Activated CD4-positive, alpha-beta memory T cell treated with anti-CD3 and anti-CD28 coated beads, Interleukin-2, amount 10 ng/mL, durations not matched to agents 7 days and 5 days (primary cell): ENCODE measurements at regions of chr17 and their contacts with region 1.

Region 1: DNA sequence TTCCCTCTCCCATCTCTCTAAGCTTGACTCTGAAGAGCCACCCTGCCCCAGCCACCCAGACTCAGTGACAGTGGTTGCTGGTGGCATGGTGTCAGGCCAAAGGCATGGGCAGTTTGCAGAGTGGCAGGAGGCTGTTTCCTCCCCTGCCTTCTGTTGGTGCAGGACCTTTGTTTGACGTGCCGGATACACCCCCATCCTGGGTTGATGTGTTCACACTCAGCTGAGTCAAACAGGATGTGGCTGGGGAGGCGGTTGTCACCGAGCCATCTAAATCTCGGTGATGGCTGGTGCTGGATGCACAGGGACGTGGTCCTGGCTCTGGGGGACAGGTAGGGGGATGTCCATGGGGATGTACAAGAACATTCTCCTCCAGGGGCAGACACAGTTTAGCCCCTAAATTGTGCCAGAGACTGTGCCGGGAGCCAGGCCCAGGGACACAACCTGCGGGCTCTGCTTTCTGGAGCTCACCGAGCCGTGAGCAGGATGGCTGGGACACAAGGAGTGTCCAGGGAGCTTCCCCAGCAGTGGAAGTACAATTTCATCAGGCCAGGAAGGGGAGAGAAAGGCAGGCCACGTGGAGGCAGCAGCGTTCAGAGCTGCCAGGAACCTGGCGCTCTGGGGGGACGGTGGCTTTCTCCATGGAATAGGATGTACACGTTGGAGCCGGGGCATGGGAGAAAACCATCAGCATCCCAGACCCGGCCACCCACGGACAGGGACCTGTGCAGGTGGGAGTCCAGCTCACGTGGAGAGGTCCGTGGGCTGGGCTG is 264.2 kb downstream of the SEC14L1 start:
- DNase-seq: peak; percentile 91
- H3K4me3 Mint-ChIP-seq: peak overlapping the region; percentile 92
- H3K27ac Mint-ChIP-seq: peak overlapping the region; percentile 94
- H3K4me1 Mint-ChIP-seq: peaks cover 95% of the 10 kb centered on the region
- H3K27me3 Mint-ChIP-seq: no peaks in the 10 kb centered on the region

Region 2: GRCh38 chr17:77372444-77373298 is 32.3 kb before region 1 on chr17:
- CTCF ChIA-PET with region 1: interaction called, 28 read pairs
- POLR2A ChIA-PET with region 1: interaction called, 48 read pairs
- DNase-seq: peak; percentile 81
- H3K4me3 Mint-ChIP-seq: peak overlapping the region; percentile 74
- H3K27ac Mint-ChIP-seq: peak overlapping the region; percentile 82
- H3K4me1 Mint-ChIP-seq: peaks cover 51% of the 10 kb centered on the region
- H3K27me3 Mint-ChIP-seq: peaks cover 3% of the 10 kb centered on the region

Region 3: GRCh38 chr17:77391668-77392375 is 13.2 kb before region 1 on chr17:
- CTCF ChIA-PET with region 1: interaction called, 98 read pairs
- POLR2A ChIA-PET with region 1: interaction called, 140 read pairs
- DNase-seq: peak; percentile 83
- H3K4me3 Mint-ChIP-seq: peak overlapping the region; percentile 66
- H3K27ac Mint-ChIP-seq: peak overlapping the region; percentile 85
- H3K4me1 Mint-ChIP-seq: peaks cover 83% of the 10 kb centered on the region
- H3K27me3 Mint-ChIP-seq: no peaks in the 10 kb centered on the region

Region 4: GRCh38 chr17:77429919-77430752 is 25.1 kb after region 1 on chr17:
- CTCF ChIA-PET with region 1: interaction called, 39 read pairs
- POLR2A ChIA-PET with region 1: interaction called, 28 read pairs
- DNase-seq: peak; percentile 83
- H3K4me3 Mint-ChIP-seq: no peak overlapping the region
- H3K27ac Mint-ChIP-seq: peak overlapping the region; percentile 38
- H3K4me1 Mint-ChIP-seq: peaks cover 83% of the 10 kb centered on the region
- H3K27me3 Mint-ChIP-seq: no peaks in the 10 kb centered on the region

Region 5: GRCh38 chr17:77451245-77451893 is 46.4 kb after region 1 on chr17:
- CTCF ChIA-PET with region 1: interaction called, 11 read pairs
- POLR2A ChIA-PET with region 1: interaction called, 78 read pairs
- DNase-seq: peak; percentile 71
- H3K4me3 Mint-ChIP-seq: peak overlapping the region; percentile 90
- H3K27ac Mint-ChIP-seq: peak overlapping the region; percentile 99
- H3K4me1 Mint-ChIP-seq: peaks cover 74% of the 10 kb centered on the region
- H3K27me3 Mint-ChIP-seq: no peaks in the 10 kb centered on the region

Region 6: DNA sequence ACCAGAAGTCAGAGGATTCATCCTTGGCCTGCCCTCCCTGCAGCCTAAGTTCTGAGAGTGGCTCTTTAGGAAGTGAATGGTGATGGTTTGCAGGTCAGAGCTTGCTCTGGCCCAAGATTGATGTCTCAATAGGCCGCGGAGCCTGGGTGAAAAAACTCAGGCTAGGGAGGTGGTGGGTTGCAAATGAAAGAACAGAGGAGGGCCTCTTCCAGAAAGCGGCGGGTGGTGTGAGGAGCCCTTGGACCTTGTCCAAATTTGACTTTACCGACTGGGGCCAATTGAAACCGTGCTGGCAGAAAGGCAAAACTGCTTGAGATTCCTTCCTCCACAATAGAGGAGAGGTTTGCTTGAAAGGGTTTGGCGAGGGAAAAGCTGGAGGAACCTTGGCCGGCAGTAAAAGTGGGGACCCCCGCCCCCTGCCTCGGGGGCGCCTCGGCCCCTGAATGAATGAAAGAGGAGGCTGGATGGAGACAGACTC is 67.0 kb after region 1 on chr17:
- CTCF ChIA-PET with region 1: interaction called, 19 read pairs
- POLR2A ChIA-PET with region 1: interaction called, 12 read pairs
- DNase-seq: no peak
- H3K4me3 Mint-ChIP-seq: peak overlapping the region; percentile 12
- H3K27ac Mint-ChIP-seq: peak overlapping the region; percentile 84
- H3K4me1 Mint-ChIP-seq: peaks cover 92% of the 10 kb centered on the region
- H3K27me3 Mint-ChIP-seq: no peaks in the 10 kb centered on the region

Region 7: GRCh38 chr17:77494664-77495435 is 89.9 kb after region 1 on chr17:
- CTCF ChIA-PET with region 1: interaction called, 34 read pairs
- POLR2A ChIA-PET with region 1: interaction called, 9 read pairs
- DNase-seq: peak; percentile 76
- H3K4me3 Mint-ChIP-seq: no peak overlapping the region
- H3K27ac Mint-ChIP-seq: peak overlapping the region; percentile 65
- H3K4me1 Mint-ChIP-seq: peaks cover 25% of the 10 kb centered on the region
- H3K27me3 Mint-ChIP-seq: no peaks in the 10 kb centered on the region